Activated CD4-positive, alpha-beta memory T cell treated with anti-CD3 and anti-CD28 coated beads for 36 hours (primary cell): ENCODE measurements at regions of chr7 and their contacts with region 1.

Region 1: DNA sequence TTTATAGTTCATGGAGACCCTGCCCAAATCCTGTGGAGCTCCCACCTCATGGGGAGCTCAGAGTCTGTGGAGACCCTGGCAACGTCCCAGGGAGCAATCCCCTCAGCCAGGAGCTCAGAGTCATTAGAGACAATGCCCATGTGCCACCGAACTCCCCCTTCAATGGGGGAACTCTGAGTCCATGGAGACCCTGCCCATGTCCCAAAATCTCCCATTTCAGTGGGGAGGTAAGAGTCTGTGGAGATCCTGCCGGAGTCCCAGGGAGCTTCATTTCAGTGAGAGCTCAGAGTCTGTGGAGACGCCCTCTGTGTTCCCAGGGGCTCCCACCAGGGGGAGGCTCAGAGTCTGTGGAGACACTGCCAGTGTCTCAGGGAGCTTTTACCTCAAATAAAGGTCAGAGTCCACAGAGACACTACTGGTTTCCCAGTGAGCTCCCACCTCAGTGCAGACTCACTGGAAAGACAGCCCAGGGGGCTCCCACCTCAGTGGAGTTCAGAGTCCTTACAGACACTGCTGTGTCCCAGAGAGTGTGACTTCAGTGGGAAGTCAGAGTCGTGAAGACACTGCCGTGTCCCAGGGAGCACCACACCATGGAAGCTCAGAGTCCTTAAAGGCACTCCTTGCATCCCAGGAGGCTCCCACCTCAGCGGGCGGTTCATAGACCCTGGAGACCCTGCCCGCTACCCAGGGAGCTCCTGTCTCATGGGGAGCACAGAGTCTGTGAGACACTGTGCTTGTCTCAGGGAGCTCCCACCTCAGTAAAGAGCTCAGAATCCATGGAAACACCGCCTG is 5.0 kb downstream of the MYO1G start:
- DNase-seq: peak; percentile 67
- H3K4me3 Mint-ChIP-seq: no peak overlapping the region
- H3K27ac Mint-ChIP-seq: peak overlapping the region; percentile 76
- H3K4me1 Mint-ChIP-seq: peaks cover 33% of the 10 kb centered on the region
- H3K27me3 Mint-ChIP-seq: no peaks in the 10 kb centered on the region

Region 2: GRCh38 chr7:44706788-44707560 is 266.8 kb before region 1 on chr7:
- CTCF ChIA-PET with region 1: no interaction called
- POLR2A ChIA-PET with region 1: no interaction called
- intact Hi-C with region 1: no loop called
- DNase-seq: no peak
- H3K4me3 Mint-ChIP-seq: no peak overlapping the region
- H3K27ac Mint-ChIP-seq: no peak overlapping the region
- H3K4me1 Mint-ChIP-seq: peaks cover 6% of the 10 kb centered on the region
- H3K27me3 Mint-ChIP-seq: no peaks in the 10 kb centered on the region

Region 3: DNA sequence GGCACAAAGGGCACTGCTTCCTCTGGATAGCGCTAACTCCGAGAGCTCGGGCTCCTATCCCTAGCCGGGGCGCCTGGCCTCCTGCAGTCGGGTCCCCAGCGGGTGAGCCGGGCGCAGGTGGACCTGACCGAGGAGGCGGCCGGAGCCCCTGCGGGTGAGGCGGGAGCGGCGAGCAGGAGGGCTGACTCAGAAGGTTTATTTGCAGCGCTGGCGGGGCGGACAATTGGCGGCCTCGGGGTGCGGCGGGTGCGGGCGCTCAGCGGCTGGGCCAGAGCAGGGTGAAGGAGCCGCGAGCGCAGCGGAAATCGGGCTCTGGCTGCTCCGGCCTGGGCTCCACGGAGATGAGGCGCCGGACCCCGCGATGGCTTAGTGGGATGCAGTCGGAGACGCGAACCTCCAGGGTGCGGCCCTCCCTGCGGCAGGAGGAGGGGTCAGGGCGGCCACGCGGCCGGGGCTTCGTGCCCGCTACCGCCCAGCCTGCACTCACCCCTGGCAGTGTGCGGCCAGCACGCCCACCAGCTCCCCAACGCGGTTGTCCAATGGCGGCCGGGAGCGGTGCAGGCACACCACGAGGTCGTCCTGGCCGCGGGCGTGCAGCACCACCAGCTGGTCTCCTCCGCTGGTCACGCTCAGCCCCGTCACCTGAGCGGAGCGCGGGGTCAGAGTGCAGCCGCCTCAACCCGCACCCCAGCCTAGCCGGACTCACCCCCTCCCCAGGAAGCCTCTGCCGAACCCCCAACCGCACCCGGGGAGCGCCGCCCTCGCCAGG is 11.1 kb before region 1 on chr7:
- CTCF ChIA-PET with region 1: interaction called, 13 read pairs
- POLR2A ChIA-PET with region 1: interaction called, 56 read pairs
- intact Hi-C with region 1: no loop called
- DNase-seq: no peak
- H3K4me3 Mint-ChIP-seq: no peak overlapping the region
- H3K27ac Mint-ChIP-seq: peak overlapping the region; percentile 33
- H3K4me1 Mint-ChIP-seq: peaks cover 21% of the 10 kb centered on the region
- H3K27me3 Mint-ChIP-seq: no peaks in the 10 kb centered on the region

Region 4: DNA sequence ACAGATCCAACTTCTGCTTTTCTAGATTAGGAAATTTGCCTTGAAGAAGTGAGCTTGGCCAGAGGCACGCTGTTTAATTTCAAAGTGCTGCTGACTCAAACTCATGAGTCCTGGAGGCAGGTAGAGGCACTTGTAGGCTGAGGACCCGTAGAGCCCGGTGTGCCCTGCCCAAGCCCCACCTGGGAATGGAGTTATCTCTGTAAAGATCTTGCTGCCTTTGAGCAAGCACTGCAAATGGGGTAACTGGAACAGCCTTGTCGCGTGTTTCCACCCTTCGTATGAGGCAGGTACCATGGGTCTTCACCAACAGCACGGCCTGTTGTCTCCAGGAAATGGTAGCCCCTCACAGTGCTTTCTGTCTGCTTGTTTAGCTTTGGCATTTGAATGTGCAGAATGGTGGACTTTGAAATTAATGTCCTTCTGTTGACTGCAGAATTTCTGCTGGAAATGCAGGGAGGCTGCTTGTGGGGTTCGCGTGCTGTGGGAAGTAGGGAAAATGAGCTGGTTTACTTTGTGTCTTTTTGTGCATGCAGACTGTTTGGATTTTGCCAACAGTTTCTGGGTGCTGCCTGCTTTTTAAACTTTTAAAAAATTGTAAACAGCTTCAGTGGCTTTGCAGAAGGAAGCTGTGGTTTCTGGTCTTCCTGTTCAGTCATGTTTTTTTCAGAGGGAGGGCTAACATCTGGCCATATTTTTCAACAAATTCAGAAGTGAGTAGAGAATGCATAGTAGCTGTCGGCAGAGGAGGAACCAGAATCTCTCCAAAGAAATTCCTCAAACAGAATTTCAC is 53.4 kb after region 1 on chr7:
- CTCF ChIA-PET with region 1: interaction called, 9 read pairs
- POLR2A ChIA-PET with region 1: interaction called, 17 read pairs
- intact Hi-C with region 1: no loop called
- DNase-seq: peak; percentile 30
- H3K4me3 Mint-ChIP-seq: peak overlapping the region; percentile 72
- H3K27ac Mint-ChIP-seq: peak overlapping the region; percentile 82
- H3K4me1 Mint-ChIP-seq: peaks cover 80% of the 10 kb centered on the region
- H3K27me3 Mint-ChIP-seq: no peaks in the 10 kb centered on the region

Region 5: GRCh38 chr7:45111298-45112223 is 137.8 kb after region 1 on chr7 and contains the start of gene TBRG4:
- CTCF ChIA-PET with region 1: interaction called, 21 read pairs
- POLR2A ChIA-PET with region 1: interaction called, 25 read pairs
- intact Hi-C with region 1: no loop called
- DNase-seq: peak; percentile 96
- H3K4me3 Mint-ChIP-seq: peak within 1 kb of the TSS; percentile 96
- H3K27ac Mint-ChIP-seq: peak within 1 kb of the TSS; percentile 94
- H3K4me1 Mint-ChIP-seq: peaks cover 40% of the 10 kb centered on the region
- H3K27me3 Mint-ChIP-seq: no peaks in the 10 kb centered on the region
- total RNA-seq, gene TBRG4: 135 to 137 TPM